Activated T-helper 1 cell treated with anti-CD3 and anti-CD28 coated beads, Interleukin-12 subunit alpha, Interleukin-12 subunit beta, Interleukin-2, Interleukin-4 antibody, amounts not matched to agents 30 ng/mL and 10 ng/mL and 1 ng/mL, durations not matched to agents 14 hours and 24 hours and 36 hours (primary cell): ENCODE measurements at regions of chr1 and their contacts with region 1.

Region 1: DNA sequence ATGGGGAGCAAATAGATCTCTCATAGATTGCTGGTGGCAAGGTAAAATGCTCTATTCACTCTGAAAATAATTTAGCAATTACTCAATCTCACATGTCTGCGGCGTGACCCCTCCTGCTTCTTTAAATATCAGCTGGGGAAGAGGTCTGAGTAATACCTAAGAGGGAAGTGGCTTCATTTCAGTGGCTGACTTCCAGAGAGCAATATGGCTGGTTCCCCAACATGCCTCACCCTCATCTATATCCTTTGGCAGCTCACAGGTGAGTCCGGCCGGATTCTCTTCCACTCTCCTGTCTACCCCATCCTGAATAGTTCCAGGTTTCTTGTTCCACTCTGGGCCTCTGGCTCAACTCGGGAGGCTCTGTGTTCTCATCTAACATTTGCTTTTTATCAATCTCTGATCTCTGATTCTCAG is at the start of gene SLAMF7:
- DNase-seq: no peak
- H3K4me3 Mint-ChIP-seq: peak within 1 kb of the TSS; percentile 90
- H3K27ac Mint-ChIP-seq: peak within 1 kb of the TSS; percentile 95
- H3K4me1 Mint-ChIP-seq: peaks cover 68% of the 10 kb centered on the region
- H3K27me3 Mint-ChIP-seq: no peaks in the 10 kb centered on the region
- total RNA-seq, gene SLAMF7: 43.7 and 53.6 TPM in 2 replicates

Region 2: DNA sequence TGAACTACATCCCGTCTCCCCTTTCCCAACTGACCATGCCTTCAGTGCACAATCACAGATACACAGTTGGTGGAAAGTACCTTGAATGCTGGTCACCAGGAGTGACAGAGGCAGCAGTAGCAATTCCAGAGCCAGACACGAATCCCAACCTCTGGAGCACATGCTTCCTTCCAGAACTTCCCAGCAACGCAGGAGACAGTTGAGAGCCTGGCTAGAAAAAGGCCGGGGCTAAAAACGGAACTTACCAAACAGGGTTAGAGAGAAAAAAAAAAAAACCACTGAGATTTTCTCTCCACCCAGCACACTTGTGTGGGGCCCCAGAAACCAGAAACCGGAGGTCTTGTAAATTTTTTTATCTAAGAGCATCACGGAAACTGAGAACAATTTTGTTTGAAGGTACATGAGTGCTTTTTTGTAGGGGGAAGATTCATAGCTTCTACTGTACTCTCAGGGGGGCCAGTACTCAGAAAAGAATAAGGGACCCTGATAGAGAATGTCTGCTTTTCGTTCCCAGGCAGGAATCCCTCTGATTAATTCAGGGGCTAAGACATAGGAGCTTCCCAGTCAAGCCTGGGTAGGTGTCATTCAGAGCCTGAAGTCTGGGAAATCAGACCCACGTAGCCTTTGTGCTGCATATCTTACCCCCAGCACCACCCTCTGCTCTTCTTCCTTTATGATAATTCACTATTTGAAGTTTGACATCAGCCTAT is 27.3 kb before region 1 on chr1 and contains the start of gene CD48:
- intact Hi-C with region 1: loop called (anchors 2 kb)
- DNase-seq: peak; percentile 41
- H3K4me3 Mint-ChIP-seq: no peak within 1 kb of the TSS
- H3K27ac Mint-ChIP-seq: no peak within 1 kb of the TSS
- H3K4me1 Mint-ChIP-seq: peaks cover 26% of the 10 kb centered on the region
- H3K27me3 Mint-ChIP-seq: no peaks in the 10 kb centered on the region
- total RNA-seq, gene CD48: 219 and 222 TPM in 2 replicates